Pancreas (tissue), 10 donors: ENCODE measurements at regions of chr4 and their contacts with region 1.

Region 1: DNA sequence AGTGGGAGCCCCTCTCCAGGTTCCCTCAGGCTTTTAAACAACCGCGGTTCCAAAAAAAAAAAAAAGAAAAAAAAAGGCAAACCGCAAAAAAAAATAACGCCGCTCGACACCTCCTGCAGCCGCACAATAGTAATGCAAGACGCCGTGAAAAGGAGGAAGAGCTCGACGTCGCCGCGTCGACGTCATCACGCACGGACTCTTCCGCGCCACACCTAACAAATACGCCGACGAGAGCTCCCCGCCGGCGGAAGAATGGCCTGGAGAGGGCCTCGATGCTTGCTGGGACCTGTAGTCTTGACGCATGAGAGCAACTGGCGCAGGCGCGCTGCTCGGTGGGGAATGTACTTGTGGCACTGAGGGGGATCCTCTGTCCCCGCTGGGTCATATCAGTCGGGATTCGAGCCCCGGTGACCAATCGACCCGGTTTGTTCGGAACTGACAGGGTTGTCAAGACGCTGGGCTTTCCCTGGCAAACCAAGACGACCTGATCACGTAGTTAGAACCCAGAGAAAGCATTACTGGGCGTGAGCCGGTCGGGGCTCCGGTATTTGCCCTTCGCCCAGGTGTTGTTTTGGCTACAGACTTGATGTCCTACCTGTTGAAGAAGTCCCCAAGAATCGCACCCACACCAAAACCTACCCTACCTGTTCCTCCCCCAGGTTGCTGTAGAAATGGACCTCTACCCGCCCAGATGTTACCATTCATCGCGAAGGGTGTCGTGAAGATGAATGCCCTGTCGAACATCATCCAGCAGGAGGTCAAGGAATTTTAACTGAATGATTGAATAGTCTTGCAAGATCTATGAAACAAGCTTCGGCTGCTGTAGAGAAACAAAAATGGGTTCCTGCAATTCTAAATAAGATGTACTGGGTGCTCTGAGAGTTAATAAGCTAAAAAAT is at the start of gene CBR4:
- DNase-seq: peak; percentile 95 to 98 (median 98)
- ATAC-seq: peak; percentile 93 to 97 (median 95)
- H3K4me3 ChIP-seq: peak within 1 kb of the TSS; percentile 32 to 59 (median 52)
- H3K27ac ChIP-seq: peak within 1 kb of the TSS; percentile 86 to 97 (median 90)
- H3K4me1 ChIP-seq: peaks cover 9 to 40% (median 28%) of the 10 kb centered on the region in 3 donors
- H3K27me3 ChIP-seq: no peaks in the 10 kb centered on the region
- CTCF ChIP-seq: peak in 2 of 4 donors; percentile 16 to 35
- total RNA-seq, gene CBR4: 11.2 to 17.0 (median 12.2) TPM

Region 2: GRCh38 chr4:168978001-168978700 is 32.2 kb before region 1 on chr4:
- intact Hi-C with region 1: no loop called
- DNase-seq: no peak
- ATAC-seq: no peak
- H3K4me3 ChIP-seq: no peak overlapping the region
- H3K27ac ChIP-seq: no peak overlapping the region
- H3K4me1 ChIP-seq: no peaks in the 10 kb centered on the region
- H3K27me3 ChIP-seq: no peaks in the 10 kb centered on the region
- CTCF ChIP-seq: no peak

Region 3: GRCh38 chr4:169147191-169147590 is 136.8 kb after region 1 on chr4:
- intact Hi-C with region 1: no loop called
- DNase-seq: no peak
- ATAC-seq: peak in 3 of 4 donors; percentile 29 to 49 (median 42)
- H3K4me3 ChIP-seq: no peak overlapping the region
- H3K27ac ChIP-seq: peak overlapping the region in 1 of 4 donors; percentile 10
- H3K4me1 ChIP-seq: peaks cover 0 to 3% (median 0%) of the 10 kb centered on the region in 3 donors
- H3K27me3 ChIP-seq: no peaks in the 10 kb centered on the region
- CTCF ChIP-seq: no peak

Region 4: GRCh38 chr4:169270810-169271691 is 260.7 kb after region 1 on chr4 and contains the start of gene SH3RF1:
- intact Hi-C with region 1: loop called in 2 of 3 experiments (anchors 10 kb)
- DNase-seq: peak; percentile 86 to 93 (median 90)
- ATAC-seq: peak; percentile 84 to 90 (median 89)
- H3K4me3 ChIP-seq: peak within 1 kb of the TSS; percentile 79 to 96 (median 94)
- H3K27ac ChIP-seq: peak within 1 kb of the TSS; percentile 92 to 97 (median 94)
- H3K4me1 ChIP-seq: peaks cover 6 to 34% (median 27%) of the 10 kb centered on the region in 3 donors
- H3K27me3 ChIP-seq: no peaks in the 10 kb centered on the region
- CTCF ChIP-seq: peak in 2 of 4 donors; percentile 7 to 14
- total RNA-seq, gene SH3RF1: 10.2 to 30.6 (median 15.1) TPM